ENCODE measurements at regions of chr10 and their contacts with region 1.

Region 1: GRCh38 chr10:72692057-72692910 is at the start of gene MCU:
- DNase-seq: peak; percentile 97
- H3K4me3 Mint-ChIP-seq: peak within 1 kb of the TSS; percentile 84
- H3K27ac Mint-ChIP-seq: peak within 1 kb of the TSS; percentile 60
- H3K4me1 Mint-ChIP-seq: peaks cover 56% of the 10 kb centered on the region
- H3K27me3 Mint-ChIP-seq: no peaks in the 10 kb centered on the region
- CTCF ChIP-seq: no peak
- total RNA-seq, gene MCU: 70.2 and 96.6 TPM in 2 replicates

Region 2: GRCh38 chr10:72455889-72456595 is 236.2 kb before region 1 on chr10:
- CTCF ChIA-PET with region 1: no interaction called
- intact Hi-C with region 1: loop called (anchors 10 kb)
- DNase-seq: no peak
- H3K4me3 Mint-ChIP-seq: no peak overlapping the region
- H3K27ac Mint-ChIP-seq: no peak overlapping the region
- H3K4me1 Mint-ChIP-seq: peaks cover 8% of the 10 kb centered on the region
- H3K27me3 Mint-ChIP-seq: no peaks in the 10 kb centered on the region
- CTCF ChIP-seq: no peak

Region 3: DNA sequence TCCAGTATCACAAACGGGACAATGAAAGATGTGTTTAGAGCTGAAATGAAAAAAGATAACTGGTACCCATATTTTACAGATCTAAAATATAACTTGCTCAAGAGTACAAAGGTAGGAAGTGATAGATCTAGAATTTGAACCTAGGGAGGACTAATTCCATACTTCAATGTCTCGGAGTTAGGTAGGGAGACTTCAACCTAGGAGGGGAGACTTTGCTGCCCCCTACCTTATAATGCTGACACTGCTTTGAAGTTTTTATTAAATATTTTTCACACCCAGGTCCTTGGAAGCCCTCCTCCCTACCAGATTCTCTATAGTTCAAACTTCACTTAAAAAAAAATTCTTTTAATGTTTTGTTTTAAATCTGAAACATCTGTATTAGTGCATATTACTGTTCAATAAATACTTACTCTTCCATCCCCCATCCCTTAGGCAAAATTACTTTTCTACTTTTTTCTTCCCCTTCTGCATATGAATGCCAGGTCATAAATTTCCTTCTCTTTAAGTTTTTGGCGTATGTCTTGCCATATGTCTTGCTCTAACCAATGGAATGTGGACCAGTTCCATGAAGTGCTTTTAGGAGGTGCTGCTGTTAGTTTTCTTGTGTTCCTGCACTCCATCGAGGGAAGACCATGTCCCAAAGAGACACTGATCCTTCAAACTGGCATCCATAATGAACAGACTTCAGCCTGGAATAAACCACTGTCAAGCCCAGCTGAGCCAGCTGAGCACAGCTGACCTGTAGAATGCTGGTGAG is 124.2 kb before region 1 on chr10:
- CTCF ChIA-PET with region 1: no interaction called
- intact Hi-C with region 1: loop called (anchors 10 kb)
- DNase-seq: peak; percentile 25
- H3K4me3 Mint-ChIP-seq: no peak overlapping the region
- H3K27ac Mint-ChIP-seq: peak overlapping the region; percentile 10
- H3K4me1 Mint-ChIP-seq: peaks cover 27% of the 10 kb centered on the region
- H3K27me3 Mint-ChIP-seq: no peaks in the 10 kb centered on the region
- CTCF ChIP-seq: no peak

Region 4: GRCh38 chr10:72649291-72649690 is 43.0 kb before region 1 on chr10:
- CTCF ChIA-PET with region 1: no interaction called
- intact Hi-C with region 1: no loop called
- DNase-seq: no peak
- H3K4me3 Mint-ChIP-seq: no peak overlapping the region
- H3K27ac Mint-ChIP-seq: no peak overlapping the region
- H3K4me1 Mint-ChIP-seq: no peaks in the 10 kb centered on the region
- H3K27me3 Mint-ChIP-seq: no peaks in the 10 kb centered on the region
- CTCF ChIP-seq: no peak

Region 5: DNA sequence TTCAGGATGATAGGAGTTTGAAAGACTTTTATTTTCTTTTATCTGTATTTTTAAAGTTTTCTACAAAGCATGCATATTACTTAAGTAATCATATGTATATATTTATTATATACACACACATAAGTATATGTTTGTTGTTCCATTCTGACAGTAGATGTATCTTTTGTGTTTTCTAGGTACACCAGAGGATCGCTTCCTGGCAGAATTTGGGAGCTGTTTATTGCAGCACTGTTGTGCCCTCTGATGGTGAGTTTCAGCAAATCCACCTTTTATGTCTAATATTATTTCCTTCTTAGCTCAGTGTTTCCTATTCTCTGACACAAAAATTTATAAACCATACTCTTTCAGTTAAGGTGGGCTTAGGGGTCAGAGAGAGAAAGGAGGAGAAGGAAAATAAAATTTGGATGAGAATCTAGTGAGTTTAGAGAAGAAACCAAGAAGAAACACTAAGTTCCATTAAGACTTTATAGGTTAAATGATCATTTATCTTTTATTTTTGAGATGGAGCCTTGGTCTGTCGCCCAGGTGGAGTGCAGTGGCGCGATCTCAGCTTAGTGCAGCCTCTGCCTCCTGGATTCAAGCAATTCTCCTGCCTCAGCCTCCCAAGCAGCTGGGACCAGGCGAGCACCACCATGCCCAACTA is 142.0 kb after region 1 on chr10:
- CTCF ChIA-PET with region 1: interaction called, 26 read pairs
- intact Hi-C with region 1: loop called (anchors 1 kb)
- DNase-seq: peak; percentile 59
- H3K4me3 Mint-ChIP-seq: no peak overlapping the region
- H3K27ac Mint-ChIP-seq: no peak overlapping the region
- H3K4me1 Mint-ChIP-seq: peaks cover 41% of the 10 kb centered on the region
- H3K27me3 Mint-ChIP-seq: no peaks in the 10 kb centered on the region
- CTCF ChIP-seq: peak; percentile 31